ENCODE measurements at regions of chr1 and their contacts with region 1.

Region 1: GRCh38 chr1:25204797-25205480 is 27.4 kb downstream of the SYF2 start:
- DNase-seq: no peak
- ATAC-seq: peak in 2 of 4 donors; percentile 52 to 69
- H3K4me3 ChIP-seq: no peak overlapping the region
- H3K27ac ChIP-seq: no peak overlapping the region
- H3K4me1 ChIP-seq: no peaks in the 10 kb centered on the region
- H3K27me3 ChIP-seq: peaks cover 0 to 9% (median 0%) of the 10 kb centered on the region in 9 donors
- CTCF ChIP-seq: peak; percentile 75 to 87 (median 80)
- POLR2A ChIP-seq: no peak

Region 2: DNA sequence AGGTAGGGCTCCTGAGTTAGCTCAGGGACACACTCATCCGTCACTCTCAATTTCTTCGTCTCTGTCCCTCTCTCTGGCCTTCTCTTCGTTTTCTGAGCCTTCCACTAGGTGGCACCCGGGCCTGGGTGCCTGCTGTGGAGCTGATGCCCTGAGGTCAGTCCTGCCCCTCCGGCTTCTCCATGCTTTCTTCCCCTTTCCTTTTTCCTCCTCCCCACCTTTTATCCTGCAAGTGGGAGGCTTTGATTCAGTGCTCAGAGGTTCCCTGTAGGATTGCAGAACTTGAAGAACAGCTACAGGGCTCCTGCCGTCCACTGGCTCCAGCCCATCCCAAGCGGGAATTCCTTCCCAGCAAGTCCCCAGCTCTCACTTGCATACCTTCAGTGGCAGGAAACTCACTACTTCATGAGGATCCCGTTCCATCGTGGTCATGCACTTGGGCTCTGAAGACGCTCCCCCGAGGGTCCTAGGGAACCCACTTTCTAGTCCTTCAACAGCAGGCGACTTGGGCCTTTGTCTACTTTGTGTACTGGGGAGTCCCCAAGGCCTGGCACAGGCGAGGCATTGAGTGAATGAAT is 516.2 kb before region 1 on chr1:
- intact Hi-C with region 1: loop called in 3 of 10 experiments (anchors 10 kb)
- DNase-seq: peak; percentile 76 to 82 (median 81)
- ATAC-seq: peak; percentile 86 to 90 (median 89)
- H3K4me3 ChIP-seq: no peak overlapping the region
- H3K27ac ChIP-seq: peak overlapping the region in 4 of 12 donors; percentile 12 to 51 (median 18)
- H3K4me1 ChIP-seq: peaks cover 1 to 33% (median 15%) of the 10 kb centered on the region in 12 donors
- H3K27me3 ChIP-seq: no peaks in the 10 kb centered on the region
- CTCF ChIP-seq: peak; percentile 80 to 97 (median 90)
- POLR2A ChIP-seq: no peak

Region 3: GRCh38 chr1:24847995-24848881 is 356.7 kb before region 1 on chr1:
- intact Hi-C with region 1: loop called (anchors 1 to 10 kb)
- DNase-seq: peak; percentile 92 to 96 (median 93)
- ATAC-seq: peak; percentile 89 to 97 (median 93)
- H3K4me3 ChIP-seq: peak overlapping the region in 11 of 12 donors; percentile 18 to 66 (median 57)
- H3K27ac ChIP-seq: peak overlapping the region in 11 of 12 donors; percentile 29 to 90 (median 55)
- H3K4me1 ChIP-seq: peaks cover 0 to 33% (median 13%) of the 10 kb centered on the region in 12 donors
- H3K27me3 ChIP-seq: no peaks in the 10 kb centered on the region
- CTCF ChIP-seq: peak; percentile 84 to 98 (median 94)
- POLR2A ChIP-seq: peak in 1 of 2 donors; percentile 34

Region 4: DNA sequence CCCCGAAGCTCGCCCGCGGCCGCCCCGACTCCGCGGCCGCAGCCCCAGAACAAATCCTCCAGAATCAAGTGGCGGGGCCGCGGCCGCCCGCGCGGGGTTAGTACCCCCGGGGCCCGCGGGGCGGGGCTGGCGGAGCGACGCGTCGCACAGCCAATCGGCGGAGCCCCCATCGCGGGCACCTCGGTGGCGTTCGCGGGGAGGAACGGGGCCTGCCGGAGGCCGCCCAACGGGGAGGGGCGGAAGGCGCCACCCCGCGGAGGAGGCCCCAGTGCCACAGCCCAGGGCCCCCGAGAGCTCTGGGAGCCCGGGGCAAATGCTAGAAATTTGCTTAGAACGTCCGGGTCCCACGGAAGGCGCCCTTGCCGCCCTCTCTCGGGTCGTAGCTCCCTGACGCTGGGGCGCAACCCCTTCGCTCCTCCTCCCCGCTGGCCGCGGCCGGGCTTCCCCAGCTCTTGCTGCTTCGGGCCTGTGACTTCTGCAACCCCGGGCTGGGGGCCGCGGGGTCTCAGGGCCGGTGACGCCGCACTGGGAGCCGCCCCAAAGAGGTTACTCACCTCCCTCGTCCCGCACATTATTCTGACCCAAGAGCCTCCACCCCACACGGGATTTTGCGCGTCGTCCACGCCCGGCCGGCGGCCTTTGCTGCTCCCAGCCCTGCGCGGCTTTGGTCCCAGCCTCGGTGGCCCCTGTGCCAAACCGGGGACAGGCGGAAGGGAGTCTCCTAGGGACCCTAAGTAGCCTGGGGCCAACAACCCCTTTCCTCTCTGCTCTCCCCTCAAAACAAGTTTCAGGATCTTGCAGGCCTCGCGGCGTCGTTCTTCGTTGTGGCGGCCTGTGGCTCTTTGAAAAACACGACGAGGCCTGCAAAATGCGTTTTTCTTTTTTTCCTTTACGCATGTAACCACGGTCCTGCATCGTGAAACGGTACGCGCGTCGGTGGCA is 274.5 kb before region 1 on chr1 and contains the start of gene RUNX3:
- intact Hi-C with region 1: loop called in 7 of 10 experiments (anchors 2 to 10 kb)
- DNase-seq: peak; percentile 51 to 90 (median 68)
- ATAC-seq: peak; percentile 32 to 68 (median 52)
- H3K4me3 ChIP-seq: peak within 1 kb of the TSS; percentile 18 to 71 (median 35)
- H3K27ac ChIP-seq: peak within 1 kb of the TSS in 3 of 12 donors; percentile 13 to 90 (median 41)
- H3K4me1 ChIP-seq: peaks cover 0 to 49% (median 14%) of the 10 kb centered on the region in 12 donors
- H3K27me3 ChIP-seq: peaks cover 80 to 98% (median 89%) of the 10 kb centered on the region in 9 donors
- CTCF ChIP-seq: peak in 2 of 12 donors; percentile 5 to 17
- POLR2A ChIP-seq: no peak
- total RNA-seq, gene RUNX3: 0.21 to 8.7 (median 0.65) TPM

Region 5: GRCh38 chr1:25037174-25038074 is 167.5 kb before region 1 on chr1:
- intact Hi-C with region 1: loop called in 1 of 10 experiments (anchors 10 kb)
- DNase-seq: peak in 3 of 5 donors; percentile 29 to 65 (median 33)
- ATAC-seq: peak in 3 of 4 donors; percentile 29 to 42 (median 41)
- H3K4me3 ChIP-seq: no peak overlapping the region
- H3K27ac ChIP-seq: no peak overlapping the region
- H3K4me1 ChIP-seq: peaks cover 0 to 36% (median 0%) of the 10 kb centered on the region in 12 donors
- H3K27me3 ChIP-seq: peaks cover 0 to 17% (median 3%) of the 10 kb centered on the region in 9 donors
- CTCF ChIP-seq: peak in 11 of 12 donors; percentile 12 to 55 (median 32)
- POLR2A ChIP-seq: no peak

Region 6: GRCh38 chr1:25099343-25099951 is 105.5 kb before region 1 on chr1:
- intact Hi-C with region 1: loop called in 1 of 10 experiments (anchors 5 kb)
- DNase-seq: peak in 1 of 5 donors; percentile 38
- ATAC-seq: no peak
- H3K4me3 ChIP-seq: no peak overlapping the region
- H3K27ac ChIP-seq: peak overlapping the region in 1 of 12 donors; percentile 33
- H3K4me1 ChIP-seq: peaks cover 0 to 35% (median 0%) of the 10 kb centered on the region in 12 donors
- H3K27me3 ChIP-seq: peaks cover 0 to 9% (median 0%) of the 10 kb centered on the region in 9 donors
- CTCF ChIP-seq: no peak
- POLR2A ChIP-seq: no peak

Measured in heart left ventricle (tissue), 16 donors.